ENCODE measurements at regions of chr12 and their contacts with region 1.

Region 1: DNA sequence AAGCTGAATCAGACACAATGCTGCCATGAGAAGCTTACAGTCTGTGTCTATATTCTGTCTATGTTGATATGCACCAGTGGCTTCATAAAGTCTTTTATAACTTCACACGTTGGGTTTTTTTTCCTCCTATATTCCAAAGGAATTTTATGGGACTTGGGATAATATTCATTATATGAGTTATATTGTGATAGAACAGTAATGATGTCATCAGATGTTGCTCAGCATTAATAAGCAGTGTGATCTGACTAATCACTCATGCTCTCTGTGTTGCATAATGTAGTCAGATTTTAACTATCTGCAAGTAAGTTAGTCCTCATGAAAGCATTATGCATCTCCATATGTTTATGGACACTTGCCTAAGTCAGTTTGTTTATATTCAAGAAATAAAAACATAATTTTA is 159.6 kb downstream of the PLCZ1 start:
- DNase-seq: no peak
- H3K4me3 ChIP-seq: no peak overlapping the region
- H3K27ac ChIP-seq: no peak overlapping the region
- H3K4me1 ChIP-seq: no peaks in the 10 kb centered on the region
- H3K27me3 ChIP-seq: no peaks in the 10 kb centered on the region
- CTCF ChIP-seq: no peak
- EP300 ChIP-seq: no peak
- POLR2A ChIP-seq: no peak

Region 2: DNA sequence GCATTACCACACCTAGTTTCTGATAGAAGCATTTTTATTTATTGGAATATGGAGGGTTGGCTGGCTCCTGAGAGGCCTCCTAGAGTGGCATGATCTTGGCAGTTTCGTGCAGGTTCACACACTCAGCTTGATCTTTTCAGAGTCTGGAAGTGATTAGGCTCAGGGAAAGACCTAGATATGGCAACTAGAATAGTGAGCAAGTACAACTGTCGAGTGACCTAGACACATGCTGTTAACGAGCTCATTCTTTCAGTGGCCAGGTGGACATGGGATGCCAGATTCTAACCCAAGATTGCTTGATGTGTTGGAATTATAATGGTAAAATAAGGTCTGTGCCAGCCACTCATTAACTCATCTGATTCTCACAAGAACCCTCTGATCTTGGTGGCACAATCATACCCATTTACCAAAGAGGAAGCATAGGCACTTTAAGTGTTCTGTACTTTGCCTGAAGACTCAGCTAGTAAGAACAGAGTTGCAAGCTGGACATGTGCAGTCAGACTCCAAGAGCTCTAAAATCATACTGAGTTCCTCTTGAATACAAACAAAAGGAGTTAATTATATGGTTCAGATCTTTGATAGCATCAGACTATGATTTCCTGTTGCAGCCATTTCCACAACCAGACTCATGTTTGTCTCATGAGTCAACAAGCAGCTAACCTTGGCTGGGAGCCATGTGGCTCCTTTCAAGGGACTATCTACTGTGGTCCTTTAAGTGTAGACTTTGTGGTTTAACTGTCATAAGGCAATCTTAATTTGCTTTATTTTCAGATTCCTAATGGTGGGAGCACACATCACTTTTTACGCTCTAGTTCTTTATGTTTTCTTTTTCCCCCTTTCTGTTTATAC is 695.5 kb after region 1 on chr12:
- in situ Hi-C with region 1: no loop called
- intact Hi-C with region 1: loop called (anchors 10 kb)
- DNase-seq: peak; percentile 44
- H3K4me3 ChIP-seq: no peak overlapping the region
- H3K27ac ChIP-seq: peak overlapping the region in 2 of 4 donors; percentile 25 to 45
- H3K4me1 ChIP-seq: peaks cover 0 to 23% (median 3%) of the 10 kb centered on the region in 4 donors
- H3K27me3 ChIP-seq: no peaks in the 10 kb centered on the region
- CTCF ChIP-seq: no peak
- EP300 ChIP-seq: no peak
- POLR2A ChIP-seq: no peak

Region 3: GRCh38 chr12:19915392-19916195 is 1337.4 kb after region 1 on chr12:
- in situ Hi-C with region 1: no loop called
- intact Hi-C with region 1: no loop called
- DNase-seq: no peak
- H3K4me3 ChIP-seq: no peak overlapping the region
- H3K27ac ChIP-seq: no peak overlapping the region
- H3K4me1 ChIP-seq: peaks cover 3 to 13% (median 11%) of the 10 kb centered on the region in 4 donors
- H3K27me3 ChIP-seq: no peaks in the 10 kb centered on the region
- CTCF ChIP-seq: peak; percentile 41 to 75 (median 62)
- EP300 ChIP-seq: no peak
- POLR2A ChIP-seq: no peak